ENCODE measurements at regions of chrX and their contacts with region 1.

Region 1: GRCh38 chrX:68989865-68990606 is 161.2 kb downstream of the EFNB1 start:
- DNase-seq: no peak
- ATAC-seq: peak; percentile 86

Region 2: DNA sequence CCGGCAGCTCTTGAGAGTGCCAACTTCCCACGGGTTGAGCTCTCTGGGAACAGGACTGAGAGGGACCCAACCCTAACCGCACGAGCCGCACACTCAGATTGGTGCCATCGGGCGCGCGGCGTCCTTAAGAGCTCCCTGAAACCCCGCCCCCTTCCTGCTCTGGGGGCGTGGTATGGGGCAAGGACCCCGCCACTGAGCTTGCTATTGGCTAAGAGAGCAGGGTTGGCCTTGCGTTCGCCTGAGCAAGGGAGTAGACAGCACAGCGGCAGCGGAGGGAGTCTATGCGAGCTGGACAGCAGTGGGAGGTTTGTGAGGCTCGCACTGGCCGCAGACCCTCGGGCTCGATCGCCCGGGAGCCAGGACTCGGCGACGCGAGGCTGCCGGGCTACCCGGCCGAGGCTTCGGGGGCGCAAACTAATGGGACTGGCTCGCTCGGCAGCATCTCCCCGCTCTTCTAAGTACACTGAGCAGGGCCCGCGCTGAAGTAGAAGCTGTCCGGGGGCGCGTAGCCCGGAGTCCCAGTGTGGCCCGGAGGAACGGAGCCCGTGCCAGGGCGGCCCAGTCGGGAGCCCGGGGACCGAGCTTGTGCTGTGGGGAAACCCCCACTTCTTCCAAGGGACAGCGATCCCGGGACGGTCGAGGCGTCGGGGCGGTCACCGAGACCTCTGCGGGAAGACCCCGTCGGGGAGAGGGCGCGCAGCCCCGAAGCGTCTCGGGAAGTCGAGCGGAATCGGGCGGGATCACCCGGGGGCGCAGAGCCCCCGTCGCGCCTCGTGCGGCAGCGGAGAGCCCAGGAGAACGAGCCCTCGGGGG is 161.1 kb before region 1 on chrX and contains the start of gene EFNB1:
- intact Hi-C with region 1: loop called (anchors 10 kb)
- DNase-seq: peak; percentile 95
- ATAC-seq: peak; percentile 92
- total RNA-seq, gene EFNB1: 15.1 TPM

Region 3: DNA sequence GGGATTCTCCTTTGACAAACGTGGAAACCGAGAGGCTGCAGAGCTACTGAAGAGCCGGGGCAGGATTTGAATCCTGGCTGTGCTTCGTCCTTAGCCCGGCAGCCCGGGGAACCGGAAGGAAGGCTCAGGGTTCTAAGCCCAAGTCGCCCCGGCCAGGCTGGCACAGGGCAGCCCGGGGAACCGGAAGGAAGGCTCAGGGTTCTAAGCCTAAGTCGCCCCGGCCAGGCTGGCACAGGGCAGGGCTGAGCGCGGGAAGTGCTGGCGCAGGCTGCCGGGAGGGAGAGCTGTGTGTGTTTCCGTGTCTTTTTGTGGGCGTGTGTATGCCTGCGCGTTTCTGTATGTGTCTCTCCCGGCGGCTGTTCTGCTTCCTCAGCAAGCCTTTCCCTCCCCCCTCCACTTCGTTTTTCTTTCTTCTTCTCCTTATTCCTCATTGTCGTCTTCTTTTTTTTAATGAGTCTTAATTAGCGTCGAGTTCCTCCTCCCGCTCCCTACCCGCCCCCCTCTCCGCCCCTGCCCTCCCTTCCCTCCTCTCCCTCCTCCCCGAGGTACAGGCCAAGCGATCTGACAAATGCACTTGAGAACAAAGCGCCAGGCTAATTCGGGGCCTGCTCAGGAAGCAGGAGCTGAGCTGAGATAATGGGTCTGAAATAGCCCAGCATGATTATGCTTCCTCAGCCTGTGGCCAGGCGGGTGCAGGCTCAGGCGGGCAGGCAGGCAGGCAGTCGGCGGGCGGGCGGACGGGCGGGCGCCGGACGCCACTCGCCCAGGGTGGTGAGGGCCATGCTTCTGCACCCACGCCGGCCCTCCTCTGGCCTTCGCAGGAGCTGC is 95.3 kb before region 1 on chrX:
- intact Hi-C with region 1: loop called (anchors 10 kb)
- DNase-seq: peak; percentile 80
- ATAC-seq: peak; percentile 87

Region 4: DNA sequence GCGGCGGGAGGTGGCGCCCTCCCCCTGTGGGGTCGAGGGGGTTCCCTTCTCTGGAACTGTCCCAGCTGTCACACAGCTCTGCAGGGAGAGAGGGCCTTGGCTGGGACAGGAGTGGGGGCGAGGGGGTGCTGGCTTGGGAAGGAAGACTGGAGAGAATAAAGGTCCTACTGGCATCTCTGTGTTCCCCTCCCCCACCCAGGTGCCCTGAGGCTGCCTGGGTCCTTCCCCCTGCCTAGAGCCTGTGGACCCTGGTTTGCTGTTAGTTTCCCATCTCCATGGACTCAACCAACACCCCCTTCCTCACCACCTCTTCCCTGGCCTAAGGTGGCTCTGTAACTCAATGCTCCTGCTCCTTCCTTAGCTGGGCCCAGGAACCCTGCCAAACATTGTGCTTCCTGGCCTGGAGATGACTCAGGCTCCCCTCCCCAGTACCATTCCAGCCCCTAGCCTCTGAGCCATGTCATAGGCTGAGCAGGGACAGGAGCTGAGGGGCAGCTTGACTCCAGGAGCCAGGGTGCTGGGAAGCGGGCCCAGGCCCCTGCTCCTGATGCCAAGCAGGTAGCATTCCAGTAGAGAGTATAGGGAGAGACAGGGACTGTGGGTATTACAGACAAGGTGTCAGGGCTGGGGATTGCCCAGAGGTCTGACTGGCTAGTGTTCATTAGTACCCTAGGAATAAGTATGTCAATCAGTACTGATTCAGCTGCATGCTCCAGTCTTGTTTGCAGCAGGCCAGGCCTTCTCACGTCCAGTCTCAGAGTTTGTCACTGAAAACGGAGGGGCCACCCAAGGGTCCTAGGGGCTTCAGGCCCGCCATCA is 60.5 kb before region 1 on chrX:
- intact Hi-C with region 1: loop called (anchors 10 kb)
- DNase-seq: peak; percentile 47
- ATAC-seq: peak; percentile 32

Region 5: GRCh38 chrX:69051901-69052300 is 61.9 kb after region 1 on chrX:
- intact Hi-C with region 1: no loop called
- DNase-seq: no peak
- ATAC-seq: no peak

Measured in Right ventricle myocardium superior (tissue), 1 donor.